Activated CD4-positive, alpha-beta T cell treated with anti-CD3 and anti-CD28 coated beads, Interleukin-2, amount 10 ng/mL, durations not matched to agents 7 days and 5 days (primary cell): ENCODE measurements at regions of chr10 and their contacts with region 1.

Region 1: DNA sequence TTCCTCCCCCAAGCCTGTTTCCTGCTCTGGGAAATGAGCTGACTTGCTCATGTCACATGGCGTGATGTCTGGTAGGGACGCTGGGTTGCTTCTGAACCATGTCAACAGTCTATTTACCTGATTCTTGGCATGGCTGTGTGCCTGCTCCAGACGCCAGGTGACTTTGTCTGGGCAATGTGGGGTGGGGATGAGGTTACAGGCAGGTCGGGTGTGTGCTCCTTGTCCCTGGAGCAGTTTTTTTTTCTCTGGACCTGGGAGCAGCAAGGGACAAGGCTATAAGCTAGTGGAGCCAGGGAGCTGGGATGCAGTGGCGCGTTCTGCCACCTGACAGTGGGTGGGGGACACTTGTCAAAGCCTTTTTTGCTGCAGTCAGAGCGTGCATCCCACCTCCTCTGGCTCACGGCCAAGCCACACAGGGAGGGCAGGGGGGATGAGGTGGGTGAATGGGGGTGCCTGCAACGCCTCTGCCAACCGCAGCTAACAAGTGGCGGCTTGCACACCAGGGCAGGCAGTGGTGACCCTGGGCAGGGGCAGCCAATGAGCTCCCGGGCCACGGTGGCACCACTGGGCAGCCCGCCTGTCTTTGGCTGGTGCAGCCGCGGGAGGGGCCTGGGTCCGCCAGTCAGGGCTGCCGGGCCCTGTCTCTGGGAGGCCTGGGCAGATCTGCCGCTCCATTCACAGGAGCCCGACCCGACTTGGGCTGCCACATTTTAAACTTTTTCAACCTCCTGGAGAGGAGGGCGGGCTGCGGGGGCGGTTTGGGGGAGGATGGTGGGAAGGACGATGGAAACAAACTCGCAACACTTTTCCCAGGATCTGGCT is 22.9 kb downstream of the DNAJB12 start:
- DNase-seq: peak; percentile 86
- H3K4me3 Mint-ChIP-seq: peak overlapping the region; percentile 45
- H3K27ac Mint-ChIP-seq: peak overlapping the region; percentile 89
- H3K4me1 Mint-ChIP-seq: peaks cover 88% of the 10 kb centered on the region
- H3K27me3 Mint-ChIP-seq: no peaks in the 10 kb centered on the region

Region 2: DNA sequence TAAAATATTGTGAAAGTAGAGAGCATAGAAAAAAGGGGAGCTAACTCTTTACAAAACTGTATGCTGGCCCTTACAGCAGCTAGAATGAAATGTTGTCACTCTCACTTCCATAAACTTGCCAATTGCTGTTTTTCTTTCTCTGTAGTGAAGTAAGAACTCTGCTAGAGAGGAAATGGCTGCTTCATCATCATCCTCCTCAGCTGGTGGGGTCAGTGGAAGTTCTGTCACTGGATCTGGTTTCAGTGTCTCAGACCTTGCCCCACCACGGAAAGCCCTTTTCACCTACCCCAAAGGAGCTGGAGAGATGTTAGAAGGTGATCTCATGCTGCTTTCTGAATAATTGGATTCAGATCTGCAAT is 108.1 kb before region 1 on chr10:
- CTCF ChIA-PET with region 1: interaction called, 21 read pairs
- POLR2A ChIA-PET with region 1: interaction called, 4 read pairs
- DNase-seq: no peak
- H3K4me3 Mint-ChIP-seq: peak overlapping the region; percentile 4
- H3K27ac Mint-ChIP-seq: peak overlapping the region; percentile 69
- H3K4me1 Mint-ChIP-seq: peaks cover 49% of the 10 kb centered on the region
- H3K27me3 Mint-ChIP-seq: no peaks in the 10 kb centered on the region

Region 3: DNA sequence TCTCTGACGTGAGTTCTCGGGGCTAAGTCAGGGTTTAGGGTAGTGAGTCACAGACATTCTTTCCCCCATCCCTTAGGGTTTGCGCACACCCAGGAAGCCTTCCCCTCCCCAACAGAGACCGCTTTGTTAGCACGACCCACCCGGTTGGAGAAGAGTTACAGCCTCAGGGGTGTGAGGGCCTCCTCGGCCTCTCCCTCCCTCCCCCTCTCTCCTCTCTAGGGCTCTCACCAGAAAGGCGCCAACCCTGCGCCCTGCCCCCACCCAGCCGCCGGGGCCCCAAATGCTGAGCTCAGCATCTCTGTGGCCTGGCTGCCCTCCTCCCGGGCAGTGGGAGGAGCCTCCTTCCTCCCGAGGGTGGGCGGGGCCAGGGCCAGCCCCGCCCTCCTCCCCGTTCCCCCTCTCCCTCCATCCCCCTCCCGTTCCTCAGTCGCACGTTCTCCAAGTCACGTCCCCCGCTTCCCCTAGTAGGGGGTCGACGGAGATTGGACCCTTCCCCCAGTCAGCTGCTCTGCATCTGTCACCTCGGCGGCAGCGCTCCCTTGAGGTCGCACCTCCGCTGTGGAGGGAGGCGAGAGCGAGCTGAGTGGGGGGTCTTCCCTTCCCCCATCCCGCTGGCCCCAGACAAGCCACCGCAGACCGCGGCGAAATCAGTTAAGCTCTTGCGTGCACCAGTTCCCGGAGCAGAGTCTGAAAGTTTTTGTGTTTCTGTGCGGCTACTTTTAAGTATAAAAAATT is 71.1 kb before region 1 on chr10:
- CTCF ChIA-PET with region 1: interaction called, 35 read pairs
- POLR2A ChIA-PET with region 1: interaction called, 5 read pairs
- DNase-seq: peak; percentile 89
- H3K4me3 Mint-ChIP-seq: peak overlapping the region; percentile 73
- H3K27ac Mint-ChIP-seq: peak overlapping the region; percentile 91
- H3K4me1 Mint-ChIP-seq: peaks cover 63% of the 10 kb centered on the region
- H3K27me3 Mint-ChIP-seq: no peaks in the 10 kb centered on the region

Region 4: GRCh38 chr10:72292223-72292691 is 39.6 kb before region 1 on chr10:
- CTCF ChIA-PET with region 1: interaction called, 25 read pairs
- POLR2A ChIA-PET with region 1: interaction called, 11 read pairs
- DNase-seq: peak; percentile 29
- H3K4me3 Mint-ChIP-seq: peak overlapping the region; percentile 11
- H3K27ac Mint-ChIP-seq: peak overlapping the region; percentile 84
- H3K4me1 Mint-ChIP-seq: peaks cover 67% of the 10 kb centered on the region
- H3K27me3 Mint-ChIP-seq: no peaks in the 10 kb centered on the region

Region 5: DNA sequence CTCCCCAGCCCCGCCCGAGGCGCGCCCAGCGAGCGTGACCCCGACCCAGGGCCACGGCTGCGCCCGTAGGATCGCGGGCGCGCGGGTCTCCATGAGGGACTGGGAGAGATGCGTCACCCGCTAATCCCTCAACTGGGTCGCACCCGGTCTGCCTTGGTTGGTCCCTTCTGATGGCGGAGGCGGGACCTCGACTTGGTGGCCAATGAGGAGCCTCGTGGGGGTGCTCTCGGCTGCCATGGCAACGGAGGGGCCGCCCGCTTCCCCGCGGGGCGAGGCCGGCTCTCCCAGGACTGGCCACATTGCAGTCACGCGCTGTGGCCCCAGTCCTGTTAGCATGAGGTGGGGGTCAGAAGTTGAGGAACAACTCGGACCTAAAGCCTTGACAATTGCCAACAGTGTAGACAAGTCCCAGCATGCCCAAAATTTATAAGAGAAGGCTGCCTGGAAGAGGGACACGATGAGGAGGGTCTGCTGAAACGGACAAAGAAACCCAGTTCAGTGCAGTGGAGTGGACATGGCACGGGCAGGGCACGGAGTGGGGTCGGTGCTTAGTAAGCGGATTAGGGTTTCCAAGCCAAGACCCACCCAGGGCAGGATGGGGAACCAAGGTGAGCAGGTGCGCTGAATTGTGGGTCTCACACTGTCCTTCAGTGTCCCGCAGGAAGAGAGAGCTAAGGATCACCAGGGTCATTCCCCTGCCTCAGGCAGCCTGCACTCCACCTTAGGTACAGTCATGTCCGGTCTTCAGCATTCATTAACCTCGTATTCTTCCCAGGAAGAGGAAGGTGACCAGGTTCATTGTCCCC is 33.6 kb before region 1 on chr10:
- CTCF ChIA-PET with region 1: interaction called, 25 read pairs
- POLR2A ChIA-PET with region 1: interaction called, 11 read pairs
- DNase-seq: peak; percentile 95
- H3K4me3 Mint-ChIP-seq: peak overlapping the region; percentile 82
- H3K27ac Mint-ChIP-seq: peak overlapping the region; percentile 97
- H3K4me1 Mint-ChIP-seq: peaks cover 70% of the 10 kb centered on the region
- H3K27me3 Mint-ChIP-seq: no peaks in the 10 kb centered on the region

Region 6: DNA sequence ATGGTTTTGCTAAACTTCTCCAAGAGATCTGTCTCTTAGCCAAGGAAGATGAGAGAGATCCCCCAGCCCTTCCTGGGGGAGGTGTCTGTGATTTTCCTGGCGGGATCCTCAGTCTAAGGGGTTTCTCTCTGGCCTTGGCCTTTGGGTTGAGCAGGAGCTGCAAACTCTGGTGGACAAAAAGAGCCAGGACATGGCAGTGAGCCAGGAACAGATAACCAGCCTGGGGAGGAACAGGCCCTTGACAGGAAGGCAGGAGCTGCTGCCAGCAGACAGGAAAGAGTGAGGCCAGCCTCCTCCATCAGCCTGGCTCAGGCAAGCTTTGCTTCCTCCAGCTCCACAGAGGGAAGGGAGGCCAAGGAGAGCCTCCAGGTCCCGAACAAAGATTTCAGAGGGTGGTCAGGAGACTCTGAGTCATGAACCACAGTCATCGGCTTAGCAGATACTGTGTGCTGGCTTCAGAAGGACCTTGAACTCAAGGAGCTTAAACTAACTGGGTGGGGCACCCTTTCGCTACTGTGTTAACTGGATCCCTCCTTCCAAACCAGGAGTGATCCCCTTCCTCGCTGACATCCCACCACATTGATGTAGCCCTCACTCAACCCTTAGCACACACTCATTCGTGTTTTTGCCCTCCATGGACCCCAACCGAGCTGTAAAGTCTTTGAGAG is 23.4 kb before region 1 on chr10:
- CTCF ChIA-PET with region 1: interaction called, 11 read pairs
- POLR2A ChIA-PET with region 1: interaction called, 4 read pairs
- DNase-seq: peak; percentile 40
- H3K4me3 Mint-ChIP-seq: no peak overlapping the region
- H3K27ac Mint-ChIP-seq: peak overlapping the region; percentile 77
- H3K4me1 Mint-ChIP-seq: peaks cover 73% of the 10 kb centered on the region
- H3K27me3 Mint-ChIP-seq: no peaks in the 10 kb centered on the region

Region 7: DNA sequence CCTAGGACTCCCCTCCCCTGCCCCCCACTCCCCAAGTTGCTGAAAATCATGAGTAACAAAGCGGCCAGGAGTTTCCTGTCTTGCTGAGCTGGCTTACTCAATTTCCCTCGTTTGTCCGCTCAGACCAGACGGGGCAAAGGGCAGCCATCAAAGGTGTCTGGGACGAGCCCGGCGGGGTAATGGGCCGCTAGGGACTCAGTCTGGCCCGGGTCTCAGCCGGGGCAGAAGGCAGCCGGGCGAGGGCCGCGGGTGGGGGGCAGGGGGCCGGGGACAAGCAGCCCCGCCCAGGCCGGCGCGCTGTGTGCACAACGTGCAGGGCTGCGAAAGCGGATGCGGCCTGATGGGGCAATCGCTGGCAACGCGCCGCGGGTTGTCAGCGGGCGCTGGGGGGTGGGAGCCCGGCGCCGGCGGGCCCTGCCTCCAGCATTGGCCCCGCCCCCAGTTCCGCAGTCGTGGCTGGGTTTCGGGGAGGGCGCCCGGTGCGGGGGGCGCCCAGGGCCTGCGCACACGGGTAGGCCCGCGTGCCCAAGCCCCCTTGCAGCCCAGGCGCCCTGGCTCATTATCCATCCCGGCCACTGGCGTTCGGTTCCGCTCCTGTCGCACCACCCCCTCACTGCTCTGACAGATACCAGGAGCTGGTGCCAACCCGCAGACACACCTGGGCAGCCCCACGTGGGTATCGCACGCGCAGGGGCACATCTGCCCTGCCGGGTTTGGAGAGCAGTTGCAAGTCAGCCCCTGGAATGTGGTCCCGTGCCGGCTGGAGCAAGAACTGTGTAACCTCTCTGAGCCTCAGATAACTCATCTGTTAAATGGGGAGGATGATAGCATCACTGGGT is 12.2 kb before region 1 on chr10:
- CTCF ChIA-PET with region 1: interaction called, 31 read pairs
- POLR2A ChIA-PET with region 1: no interaction called
- DNase-seq: peak; percentile 89
- H3K4me3 Mint-ChIP-seq: peak overlapping the region; percentile 69
- H3K27ac Mint-ChIP-seq: peak overlapping the region; percentile 95
- H3K4me1 Mint-ChIP-seq: peaks cover 83% of the 10 kb centered on the region
- H3K27me3 Mint-ChIP-seq: no peaks in the 10 kb centered on the region